Sciatic nerve (tissue), 2 donors: ENCODE measurements at regions of chr4 and their contacts with region 1.

Region 1: GRCh38 chr4:174714393-174715211 is 114.4 kb downstream of the GLRA3 start:
- DNase-seq: no peak
- ATAC-seq: no peak

Region 2: GRCh38 chr4:173564461-173564860 is 1150.1 kb before region 1 on chr4:
- intact Hi-C with region 1: loop called (anchors 5 kb)
- DNase-seq: no peak
- ATAC-seq: no peak

Region 3: GRCh38 chr4:174658246-174658645 is 56.4 kb before region 1 on chr4:
- intact Hi-C with region 1: no loop called
- DNase-seq: no peak
- ATAC-seq: no peak